WTC11 (cell line): ENCODE measurements at regions of chr5 and their contacts with region 1.

Region 1: DNA sequence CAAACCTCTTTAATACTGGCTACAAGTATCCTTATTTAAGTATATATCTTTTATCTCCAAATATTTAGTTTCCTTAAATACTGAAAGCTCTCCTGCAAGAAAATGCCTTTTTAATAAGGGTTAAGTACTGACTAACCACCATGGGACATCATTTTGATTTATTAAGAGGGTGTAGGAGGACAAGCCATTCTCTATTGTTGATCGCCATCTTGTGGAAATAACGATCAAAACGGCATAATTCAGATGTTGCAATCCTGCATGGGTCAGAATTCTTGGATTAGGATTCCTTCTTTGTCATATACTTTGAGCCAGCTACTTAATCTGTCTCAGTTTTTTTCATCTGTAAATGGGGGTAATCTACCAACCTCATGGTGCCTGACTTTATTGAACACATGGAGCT is 28.7 kb upstream of the C5orf46 start:
- DNase-seq: no peak
- ATAC-seq: peak; percentile 85
- H3K4me3 Mint-ChIP-seq: no peak overlapping the region
- H3K27ac Mint-ChIP-seq: no peak overlapping the region
- H3K4me1 Mint-ChIP-seq: peaks cover 13% of the 10 kb centered on the region
- H3K27me3 Mint-ChIP-seq: no peaks in the 10 kb centered on the region
- CTCF ChIP-seq: no peak

Region 2: DNA sequence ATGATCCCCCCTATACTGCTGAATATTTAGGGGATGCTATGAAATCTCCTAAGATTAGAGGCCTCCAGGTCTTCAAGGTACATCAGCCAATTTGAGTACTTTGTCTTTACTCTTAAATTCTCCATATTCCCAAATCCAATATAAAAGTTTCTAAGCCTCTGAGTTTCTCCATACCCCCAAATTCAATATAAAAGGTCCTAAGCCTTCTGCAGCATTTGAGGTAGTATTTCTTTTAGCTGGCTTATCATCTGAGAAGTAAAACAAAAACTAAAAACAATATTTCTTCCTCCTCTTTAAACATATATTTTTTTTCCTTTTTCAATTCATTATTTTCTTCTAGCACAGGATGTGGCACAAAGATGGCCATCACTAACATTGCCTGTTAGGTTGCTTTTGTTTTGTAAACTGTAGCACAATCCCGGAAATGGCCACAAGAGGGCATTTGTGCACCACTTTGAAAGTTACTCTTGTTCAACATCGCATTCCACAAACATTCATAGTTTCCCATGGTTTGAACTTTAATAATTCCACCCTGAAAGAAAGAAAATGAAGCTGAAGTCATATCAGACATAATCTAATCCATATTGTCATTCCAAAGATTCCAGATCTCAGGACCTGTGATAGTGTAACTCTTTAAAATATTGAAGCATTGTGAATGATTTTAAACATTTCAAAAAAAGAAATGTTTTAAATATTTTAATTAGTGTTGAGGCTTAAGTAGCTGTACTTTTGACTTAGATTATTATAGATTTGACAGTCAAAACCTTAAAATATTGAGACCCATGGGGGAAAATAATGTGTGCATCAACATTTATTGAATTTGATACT is 77.5 kb before region 1 on chr5:
- CTCF ChIA-PET with region 1: interaction called, 26 read pairs
- POLR2A ChIA-PET with region 1: no interaction called
- DNase-seq: peak; percentile 77
- ATAC-seq: no peak
- H3K4me3 Mint-ChIP-seq: no peak overlapping the region
- H3K27ac Mint-ChIP-seq: peak overlapping the region; percentile 7; the same call in 1 of the 2 replicates
- H3K4me1 Mint-ChIP-seq: peaks cover 83% of the 10 kb centered on the region
- H3K27me3 Mint-ChIP-seq: no peaks in the 10 kb centered on the region
- CTCF ChIP-seq: peak; percentile 84

Region 3: DNA sequence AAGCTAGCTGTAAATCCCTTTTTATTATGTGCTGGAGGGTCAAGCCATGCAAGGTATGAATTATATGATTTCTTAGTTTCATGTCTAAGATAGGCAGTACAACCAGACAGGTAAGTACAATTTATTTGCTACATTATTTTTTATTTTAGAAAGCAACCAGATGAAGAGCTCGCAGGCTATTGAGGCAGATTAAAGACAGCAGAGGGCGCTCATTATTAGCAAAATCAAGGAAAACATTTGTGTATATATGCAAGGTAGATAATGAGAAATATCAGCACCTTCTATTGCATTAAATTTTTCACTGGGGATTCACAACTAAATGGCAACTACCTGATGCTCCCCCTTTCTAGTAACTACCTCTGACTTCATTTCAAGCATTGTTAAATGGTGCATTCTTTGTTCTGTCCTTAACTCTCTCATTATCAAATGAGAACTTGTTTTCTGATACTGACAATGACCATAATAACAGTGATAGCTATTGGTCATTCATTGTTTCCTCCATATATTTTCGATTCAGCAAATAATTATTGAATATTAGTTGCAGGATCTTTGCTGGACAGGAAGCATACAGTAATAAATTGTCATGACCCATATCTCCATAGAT is 47.9 kb before region 1 on chr5:
- CTCF ChIA-PET with region 1: interaction called, 35 read pairs
- POLR2A ChIA-PET with region 1: interaction called, 3 read pairs
- DNase-seq: no peak
- ATAC-seq: peak; percentile 50
- H3K4me3 Mint-ChIP-seq: no peak overlapping the region
- H3K27ac Mint-ChIP-seq: no peak overlapping the region
- H3K4me1 Mint-ChIP-seq: peaks cover 24% of the 10 kb centered on the region
- H3K27me3 Mint-ChIP-seq: no peaks in the 10 kb centered on the region
- CTCF ChIP-seq: peak; percentile 37; the same call in 1 of the 2 replicates